H1 (cell line): ENCODE measurements at regions of chr14 and their contacts with region 1.

Region 1: GRCh38 chr14:20327005-20327869 is 5.8 kb downstream of the CCNB1IP1 start:
- DNase-seq: no peak
- H3K4me3 ChIP-seq: no peak overlapping the region
- H3K27ac ChIP-seq: no peak overlapping the region
- H3K4me1 ChIP-seq: peaks cover 0 to 3% (median 0%) of the 10 kb centered on the region in 4 experiments; a peak in 3 of 7 replicates
- H3K27me3 ChIP-seq: no peaks in the 10 kb centered on the region
- CTCF ChIP-seq: peak in 2 of 3 experiments; percentile 20 to 62; a peak in 2 of 4 replicates
- EP300 ChIP-seq: no peak
- POLR2A ChIP-seq: peak in 1 of 2 experiments; percentile 37; a peak in 1 of 3 replicates
- RAD21 ChIP-seq: peak; percentile 53 to 57

Region 2: GRCh38 chr14:20118795-20119194 is 208.4 kb before region 1 on chr14:
- CTCF ChIA-PET with region 1: no interaction called
- POLR2A ChIA-PET with region 1: no interaction called
- DNase-seq: no peak
- H3K4me3 ChIP-seq: no peak overlapping the region
- H3K27ac ChIP-seq: no peak overlapping the region
- H3K4me1 ChIP-seq: no peaks in the 10 kb centered on the region
- H3K27me3 ChIP-seq: no peaks in the 10 kb centered on the region
- CTCF ChIP-seq: no peak
- EP300 ChIP-seq: peak in 1 of 2 experiments; percentile 75; a peak in 1 of 3 replicates
- POLR2A ChIP-seq: no peak
- RAD21 ChIP-seq: no peak

Region 3: GRCh38 chr14:20350860-20351259 is 23.6 kb after region 1 on chr14:
- CTCF ChIA-PET with region 1: interaction called, 13 read pairs
- POLR2A ChIA-PET with region 1: interaction called, 7 read pairs
- DNase-seq: no peak
- H3K4me3 ChIP-seq: no peak overlapping the region
- H3K27ac ChIP-seq: no peak overlapping the region
- H3K4me1 ChIP-seq: no peaks in the 10 kb centered on the region
- H3K27me3 ChIP-seq: no peaks in the 10 kb centered on the region
- CTCF ChIP-seq: no peak
- EP300 ChIP-seq: no peak
- POLR2A ChIP-seq: no peak
- RAD21 ChIP-seq: no peak

Region 4: DNA sequence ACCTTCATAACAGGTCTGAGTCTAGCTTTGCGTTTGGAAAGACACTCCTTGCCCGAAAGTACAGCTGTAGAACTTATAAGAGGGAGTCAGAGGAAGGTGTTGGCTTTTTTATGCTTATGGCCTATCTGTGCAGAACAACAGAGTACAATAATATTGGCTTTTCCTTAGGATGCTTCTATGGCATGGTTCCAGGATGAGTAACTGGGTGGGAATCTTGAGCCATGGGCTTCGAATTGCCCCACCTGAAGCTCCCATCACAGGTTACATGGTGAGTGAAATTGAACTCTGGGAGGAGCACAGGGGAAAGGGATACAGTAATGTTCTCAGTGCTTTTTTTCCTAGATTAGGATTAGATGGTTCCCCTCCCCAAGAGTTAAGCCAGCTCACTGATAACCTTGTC is 29.2 kb after region 1 on chr14:
- CTCF ChIA-PET with region 1: interaction called, 12 read pairs
- POLR2A ChIA-PET with region 1: interaction called, 7 read pairs
- DNase-seq: peak in 1 of 2 experiments; percentile 8
- H3K4me3 ChIP-seq: no peak overlapping the region
- H3K27ac ChIP-seq: no peak overlapping the region
- H3K4me1 ChIP-seq: no peaks in the 10 kb centered on the region
- H3K27me3 ChIP-seq: no peaks in the 10 kb centered on the region
- CTCF ChIP-seq: no peak
- EP300 ChIP-seq: no peak
- POLR2A ChIP-seq: no peak
- RAD21 ChIP-seq: no peak